CD4-positive, alpha-beta memory T cell (primary cell): ENCODE measurements at regions of chr5 and their contacts with region 1.

Region 1: GRCh38 chr5:127030259-127031146 is at the start of gene MARCHF3:
- DNase-seq: peak; percentile 92 to 95 (median 94)
- H3K4me3 ChIP-seq: peak within 1 kb of the TSS; percentile 51 to 85
- H3K4me3 Mint-ChIP-seq: peak within 1 kb of the TSS; percentile 89 to 94 (median 90)
- H3K27ac ChIP-seq: peak within 1 kb of the TSS; percentile 56
- H3K27ac Mint-ChIP-seq: peak within 1 kb of the TSS; percentile 35 to 91 (median 77)
- H3K4me1 ChIP-seq: peaks cover 16% of the 10 kb centered on the region
- H3K4me1 Mint-ChIP-seq: peaks cover 5 to 17% (median 7%) of the 10 kb centered on the region in 4 donors
- H3K27me3 ChIP-seq: no peaks in the 10 kb centered on the region
- H3K27me3 Mint-ChIP-seq: peaks cover 0 to 17% of the 10 kb centered on the region in 2 donors
- total RNA-seq, gene MARCHF3: 3.2 to 3.3 TPM

Region 2: DNA sequence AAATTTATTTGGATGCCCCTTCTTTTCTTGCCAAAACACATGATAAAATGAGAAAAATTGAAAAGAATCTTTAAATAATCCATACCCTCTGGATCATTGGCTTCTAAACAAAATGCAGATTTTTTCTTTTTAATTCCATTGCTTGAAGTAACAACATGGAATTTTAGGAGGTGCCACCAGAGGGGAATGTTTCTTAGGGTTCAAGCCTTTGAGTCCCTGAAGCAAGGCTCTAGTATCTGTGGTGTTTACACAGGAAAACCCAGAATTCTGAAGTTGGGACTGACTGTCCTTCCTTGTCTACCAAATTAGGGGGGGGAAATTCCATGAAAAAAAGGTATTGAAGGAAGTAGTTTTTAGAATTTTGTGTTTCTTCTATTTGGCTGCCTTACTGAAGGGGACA is 184.2 kb before region 1 on chr5:
- CTCF ChIA-PET with region 1: no interaction called
- POLR2A ChIA-PET with region 1: interaction called, 5 read pairs
- intact Hi-C with region 1: loop called (anchors 2 kb)
- DNase-seq: no peak
- H3K4me3 ChIP-seq: no peak overlapping the region
- H3K4me3 Mint-ChIP-seq: peak overlapping the region in 1 of 8 donors; percentile 52
- H3K27ac ChIP-seq: no peak overlapping the region
- H3K27ac Mint-ChIP-seq: peak overlapping the region in 5 of 7 donors; percentile 65 to 90 (median 87)
- H3K4me1 ChIP-seq: peaks cover 24% of the 10 kb centered on the region
- H3K4me1 Mint-ChIP-seq: peaks cover 12 to 40% (median 28%) of the 10 kb centered on the region in 4 donors
- H3K27me3 ChIP-seq: no peaks in the 10 kb centered on the region
- H3K27me3 Mint-ChIP-seq: no peaks in the 10 kb centered on the region

Region 3: DNA sequence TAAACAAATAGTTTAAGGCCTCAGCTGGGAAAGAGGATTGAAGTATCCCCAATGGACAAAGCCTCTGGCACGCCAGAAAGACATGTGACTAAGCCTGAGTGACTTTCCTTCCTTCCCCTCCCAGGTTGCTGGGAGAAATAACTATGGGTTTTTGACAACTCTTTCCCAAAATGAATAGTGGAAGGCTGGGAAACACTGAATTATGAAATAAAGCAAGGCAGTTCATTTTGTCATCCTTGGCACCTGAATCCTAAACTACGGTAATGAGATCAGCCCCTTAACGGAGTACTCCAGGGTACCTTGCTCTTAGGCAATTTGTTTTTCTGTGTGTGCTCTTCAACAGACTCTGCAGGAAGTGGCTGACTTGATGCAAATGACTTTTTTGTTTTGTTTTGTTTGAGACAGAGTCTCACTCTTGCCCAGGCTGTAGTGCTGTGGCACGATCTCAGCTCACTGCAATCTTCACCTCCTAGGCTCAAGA is 178.4 kb before region 1 on chr5:
- CTCF ChIA-PET with region 1: no interaction called
- POLR2A ChIA-PET with region 1: interaction called, 6 read pairs
- intact Hi-C with region 1: loop called (anchors 2 kb)
- DNase-seq: peak in 4 of 5 donors; percentile 27 to 44 (median 34)
- H3K4me3 ChIP-seq: peak overlapping the region in 1 of 2 donors; percentile 29
- H3K4me3 Mint-ChIP-seq: peak overlapping the region; percentile 65 to 87 (median 78)
- H3K27ac ChIP-seq: peak overlapping the region; percentile 8
- H3K27ac Mint-ChIP-seq: peak overlapping the region; percentile 89 to 97 (median 95)
- H3K4me1 ChIP-seq: peaks cover 36% of the 10 kb centered on the region
- H3K4me1 Mint-ChIP-seq: peaks cover 33 to 50% (median 45%) of the 10 kb centered on the region in 4 donors
- H3K27me3 ChIP-seq: no peaks in the 10 kb centered on the region
- H3K27me3 Mint-ChIP-seq: no peaks in the 10 kb centered on the region

Region 4: DNA sequence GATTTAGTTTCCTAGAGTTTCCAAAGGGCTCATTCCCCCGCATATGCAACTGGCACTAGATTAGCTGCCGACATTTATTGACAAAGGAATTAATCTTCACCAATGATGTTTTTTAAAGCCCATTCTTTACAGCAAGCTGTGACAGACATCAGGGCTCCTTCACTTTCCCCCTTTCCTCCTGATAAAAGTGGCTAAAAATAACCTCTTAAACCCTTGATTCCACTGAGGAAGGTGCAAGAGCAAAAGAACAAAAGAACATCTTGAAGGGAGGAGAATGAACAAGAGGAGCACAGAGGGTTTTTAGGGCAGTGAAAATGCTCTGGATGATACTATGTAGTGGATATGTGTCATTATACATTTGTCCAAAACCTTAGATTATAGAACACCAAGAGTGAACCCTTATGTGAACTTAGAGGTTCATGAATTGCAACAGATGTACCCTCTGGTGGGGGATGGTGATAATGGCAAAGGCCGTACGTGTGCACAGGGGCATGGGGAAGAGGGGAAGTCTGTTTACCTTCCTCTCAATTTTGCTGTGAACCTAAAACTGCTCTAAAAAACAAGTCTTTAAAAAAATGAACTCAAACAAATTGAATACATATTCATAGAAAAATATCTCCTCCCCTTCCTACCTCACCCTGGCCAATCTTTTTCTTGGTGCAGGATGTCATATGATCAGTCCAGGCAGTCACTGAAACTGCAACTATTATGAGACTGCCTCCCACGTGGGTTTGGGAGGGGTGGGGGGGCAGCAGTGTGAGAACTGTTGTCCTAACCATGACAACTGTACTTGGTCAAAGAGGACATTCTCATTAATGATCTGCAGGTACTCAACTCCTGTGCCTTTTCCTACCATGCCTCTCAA is 83.1 kb before region 1 on chr5:
- CTCF ChIA-PET with region 1: no interaction called
- POLR2A ChIA-PET with region 1: no interaction called
- intact Hi-C with region 1: no loop called
- DNase-seq: no peak
- H3K4me3 ChIP-seq: no peak overlapping the region
- H3K4me3 Mint-ChIP-seq: no peak overlapping the region
- H3K27ac ChIP-seq: no peak overlapping the region
- H3K27ac Mint-ChIP-seq: no peak overlapping the region
- H3K4me1 ChIP-seq: no peaks in the 10 kb centered on the region
- H3K4me1 Mint-ChIP-seq: peaks cover 0 to 2% (median 0%) of the 10 kb centered on the region in 4 donors
- H3K27me3 ChIP-seq: no peaks in the 10 kb centered on the region
- H3K27me3 Mint-ChIP-seq: peaks cover 0 to 4% of the 10 kb centered on the region in 2 donors

Region 5: DNA sequence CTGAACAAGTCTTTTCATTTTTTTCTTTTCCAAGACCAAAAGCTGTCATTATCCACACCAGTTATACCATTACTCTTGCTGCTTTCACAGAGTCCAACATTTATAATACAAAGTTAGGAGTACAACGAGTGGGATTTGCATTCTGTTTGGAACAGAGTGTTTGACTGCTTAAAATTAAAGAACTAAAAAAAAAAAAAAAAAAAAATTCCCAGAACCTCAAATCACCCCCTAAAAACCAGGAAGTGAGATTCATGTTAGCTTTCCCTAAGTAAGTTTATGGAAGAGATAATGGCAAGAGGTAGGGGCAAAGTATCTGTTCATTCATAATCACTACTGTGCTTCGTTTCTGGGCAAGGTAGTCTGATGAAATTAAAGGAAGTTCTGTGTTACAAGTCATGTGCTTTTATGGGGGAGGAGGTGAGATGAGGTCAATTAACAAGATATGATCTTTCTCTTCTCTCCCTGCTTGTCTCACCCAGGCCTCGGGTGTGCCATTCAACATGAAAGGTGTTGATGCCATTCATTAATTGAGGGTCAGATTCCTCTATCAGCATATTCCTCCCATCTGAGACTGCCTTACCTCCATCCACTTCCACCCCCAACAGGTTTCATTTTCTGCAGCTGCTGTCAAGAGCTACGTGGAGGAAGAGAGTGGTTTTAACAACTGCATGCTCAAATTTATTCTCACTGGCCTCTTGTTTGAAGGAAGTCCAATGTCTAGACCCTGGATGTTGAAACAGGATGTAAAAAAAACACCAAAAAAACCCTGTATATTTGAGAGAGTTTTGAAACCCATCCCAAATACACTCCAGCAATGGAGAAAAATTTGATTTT is 58.2 kb before region 1 on chr5:
- CTCF ChIA-PET with region 1: no interaction called
- POLR2A ChIA-PET with region 1: no interaction called
- intact Hi-C with region 1: loop called (anchors 5 kb)
- DNase-seq: peak; percentile 12 to 39 (median 31)
- H3K4me3 ChIP-seq: peak overlapping the region in 1 of 2 donors; percentile 23
- H3K4me3 Mint-ChIP-seq: peak overlapping the region in 7 of 8 donors; percentile 78 to 88 (median 82)
- H3K27ac ChIP-seq: peak overlapping the region; percentile 15
- H3K27ac Mint-ChIP-seq: peak overlapping the region; percentile 61 to 91 (median 84)
- H3K4me1 ChIP-seq: peaks cover 22% of the 10 kb centered on the region
- H3K4me1 Mint-ChIP-seq: peaks cover 19 to 31% (median 22%) of the 10 kb centered on the region in 4 donors
- H3K27me3 ChIP-seq: no peaks in the 10 kb centered on the region
- H3K27me3 Mint-ChIP-seq: no peaks in the 10 kb centered on the region

Region 6: GRCh38 chr5:127014573-127014972 is 15.9 kb before region 1 on chr5:
- CTCF ChIA-PET with region 1: no interaction called
- POLR2A ChIA-PET with region 1: no interaction called
- intact Hi-C with region 1: no loop called
- DNase-seq: no peak
- H3K4me3 ChIP-seq: no peak overlapping the region
- H3K4me3 Mint-ChIP-seq: no peak overlapping the region
- H3K27ac ChIP-seq: no peak overlapping the region
- H3K27ac Mint-ChIP-seq: no peak overlapping the region
- H3K4me1 ChIP-seq: peaks cover 11% of the 10 kb centered on the region
- H3K4me1 Mint-ChIP-seq: peaks cover 0 to 2% (median under 1%) of the 10 kb centered on the region in 4 donors
- H3K27me3 ChIP-seq: no peaks in the 10 kb centered on the region
- H3K27me3 Mint-ChIP-seq: peaks cover 1 to 6% of the 10 kb centered on the region in 2 donors

Region 7: GRCh38 chr5:127072861-127073846 is 42.7 kb after region 1 on chr5 and contains the start of gene C5orf63:
- CTCF ChIA-PET with region 1: interaction called, 8 read pairs
- POLR2A ChIA-PET with region 1: interaction called, 13 read pairs
- intact Hi-C with region 1: loop called (anchors 1 kb)
- DNase-seq: peak; percentile 53 to 70 (median 59)
- H3K4me3 ChIP-seq: peak within 1 kb of the TSS; percentile 64 to 71
- H3K4me3 Mint-ChIP-seq: peak within 1 kb of the TSS; percentile 88 to 97 (median 91)
- H3K27ac ChIP-seq: peak within 1 kb of the TSS; percentile 33
- H3K27ac Mint-ChIP-seq: peak within 1 kb of the TSS; percentile 45 to 95 (median 91)
- H3K4me1 ChIP-seq: peaks cover 16% of the 10 kb centered on the region
- H3K4me1 Mint-ChIP-seq: peaks cover 10 to 21% (median 17%) of the 10 kb centered on the region in 4 donors
- H3K27me3 ChIP-seq: no peaks in the 10 kb centered on the region
- H3K27me3 Mint-ChIP-seq: no peaks in the 10 kb centered on the region
- total RNA-seq, gene C5orf63: 13.1 to 17.9 TPM

Region 8: GRCh38 chr5:127229185-127229889 is 198.8 kb after region 1 on chr5:
- CTCF ChIA-PET with region 1: no interaction called
- POLR2A ChIA-PET with region 1: interaction called, 3 read pairs
- intact Hi-C with region 1: loop called (anchors 5 kb)
- DNase-seq: peak; percentile 54 to 64 (median 59)
- H3K4me3 ChIP-seq: peak overlapping the region in 1 of 2 donors; percentile 78
- H3K4me3 Mint-ChIP-seq: peak overlapping the region; percentile 55 to 88 (median 80)
- H3K27ac ChIP-seq: peak overlapping the region; percentile 45
- H3K27ac Mint-ChIP-seq: peak overlapping the region; percentile 45 to 87 (median 82)
- H3K4me1 ChIP-seq: peaks cover 16% of the 10 kb centered on the region
- H3K4me1 Mint-ChIP-seq: peaks cover 15 to 24% (median 18%) of the 10 kb centered on the region in 4 donors
- H3K27me3 ChIP-seq: no peaks in the 10 kb centered on the region
- H3K27me3 Mint-ChIP-seq: no peaks in the 10 kb centered on the region

Region 9: DNA sequence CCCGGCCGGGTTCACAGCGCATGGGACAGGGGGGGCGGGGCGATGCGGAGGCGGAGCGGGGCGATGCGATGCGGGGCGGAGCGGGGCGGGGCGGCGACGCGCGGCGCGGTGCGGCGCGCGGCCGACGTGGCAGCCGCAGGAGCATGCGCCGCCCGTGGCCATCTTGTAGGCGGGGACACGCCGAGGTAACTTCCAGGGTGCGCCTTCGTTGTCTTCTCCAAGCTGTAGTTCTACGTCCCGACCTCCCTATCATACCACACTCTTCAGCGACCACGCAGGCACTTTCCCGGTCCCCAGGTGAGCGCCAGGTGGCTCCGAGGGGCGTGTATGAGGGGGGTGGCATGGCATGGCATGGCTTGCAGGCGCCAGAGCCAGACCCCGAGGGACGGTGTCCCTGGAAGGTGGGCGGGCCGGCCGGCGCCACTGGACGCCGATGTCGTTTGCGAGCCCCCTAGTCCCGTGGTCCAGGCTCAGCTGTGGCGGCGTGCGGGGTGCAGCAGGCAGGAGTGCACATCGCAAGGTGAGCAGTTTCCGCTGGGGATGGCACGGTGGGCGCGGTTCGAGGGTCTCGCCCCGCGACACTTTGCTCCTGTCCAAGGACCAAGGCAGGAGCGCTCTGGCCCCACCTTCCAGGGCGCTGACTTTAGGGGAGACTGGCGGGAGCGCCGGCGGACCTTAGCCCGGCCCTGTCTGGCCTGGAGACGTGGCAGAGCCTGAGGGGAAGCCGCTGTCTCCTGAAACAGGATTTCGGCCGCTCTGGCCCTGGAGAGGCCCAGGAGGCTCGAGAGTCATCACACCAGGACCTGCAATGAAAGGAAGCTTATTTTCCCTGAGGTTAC is 487.2 kb after region 1 on chr5 and contains the start of gene PRRC1:
- CTCF ChIA-PET with region 1: no interaction called
- POLR2A ChIA-PET with region 1: no interaction called
- intact Hi-C with region 1: loop called (anchors 1 kb)
- DNase-seq: peak; percentile 74 to 83 (median 76)
- H3K4me3 ChIP-seq: peak within 1 kb of the TSS; percentile 79 to 97
- H3K4me3 Mint-ChIP-seq: peak within 1 kb of the TSS; percentile 87 to 93 (median 90)
- H3K27ac ChIP-seq: peak within 1 kb of the TSS; percentile 87
- H3K27ac Mint-ChIP-seq: peak within 1 kb of the TSS; percentile 70 to 93 (median 88)
- H3K4me1 ChIP-seq: peaks cover 25% of the 10 kb centered on the region
- H3K4me1 Mint-ChIP-seq: peaks cover 26 to 45% (median 34%) of the 10 kb centered on the region in 4 donors
- H3K27me3 ChIP-seq: peaks cover under 1% of the 10 kb centered on the region
- H3K27me3 Mint-ChIP-seq: peaks cover 4% of the 10 kb centered on the region in 2 donors
- total RNA-seq, gene PRRC1: 57.0 to 59.9 TPM